Activated CD8-positive, alpha-beta T cell treated with anti-CD3 and anti-CD28 coated beads, Interleukin-2, amount 10 ng/mL, durations not matched to agents 7 days and 5 days (primary cell): ENCODE measurements at regions of chr6 and their contacts with region 1.

Region 1: GRCh38 chr6:138987640-138988468 is at the start of gene REPS1:
- DNase-seq: peak; percentile 93
- ATAC-seq: peak; percentile 97
- H3K4me3 Mint-ChIP-seq: peak within 1 kb of the TSS; percentile 87
- H3K27ac Mint-ChIP-seq: peak within 1 kb of the TSS; percentile 94
- H3K4me1 Mint-ChIP-seq: peaks cover 11% of the 10 kb centered on the region
- H3K27me3 Mint-ChIP-seq: peaks cover under 1% of the 10 kb centered on the region
- total RNA-seq, gene REPS1: 39.2 to 45.2 TPM

Region 2: DNA sequence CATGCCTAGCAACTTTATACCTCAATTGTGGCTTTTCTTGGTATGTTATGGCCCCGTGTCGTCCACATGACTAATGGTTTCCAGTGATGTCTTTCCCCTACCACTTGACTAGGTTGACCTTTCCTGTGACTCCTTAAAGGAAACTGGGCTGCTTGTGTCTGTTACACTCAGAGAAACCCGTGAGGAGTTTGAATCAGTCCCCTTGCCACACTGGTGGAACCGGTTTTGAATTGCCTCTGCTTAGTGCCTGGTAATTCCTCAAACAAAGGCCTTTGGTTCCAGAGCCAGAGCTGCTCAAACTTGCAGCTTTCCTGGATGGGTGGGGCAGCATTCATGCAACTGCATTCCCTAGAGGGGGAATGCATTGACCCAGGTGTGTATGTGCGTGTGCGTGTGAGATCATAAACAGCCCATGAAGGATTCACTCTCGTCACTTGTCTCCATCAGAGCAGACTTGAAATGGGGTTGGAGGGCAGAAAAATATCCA is 170.0 kb before region 1 on chr6:
- CTCF ChIA-PET with region 1: interaction called, 19 read pairs
- POLR2A ChIA-PET with region 1: no interaction called
- DNase-seq: peak; percentile 21
- ATAC-seq: no peak
- H3K4me3 Mint-ChIP-seq: no peak overlapping the region
- H3K27ac Mint-ChIP-seq: no peak overlapping the region
- H3K4me1 Mint-ChIP-seq: peaks cover 24% of the 10 kb centered on the region
- H3K27me3 Mint-ChIP-seq: no peaks in the 10 kb centered on the region

Region 3: GRCh38 chr6:139028658-139029469 is 41.0 kb after region 1 on chr6 and contains the start of gene ABRACL:
- CTCF ChIA-PET with region 1: interaction called, 8 read pairs
- POLR2A ChIA-PET with region 1: interaction called, 20 read pairs
- DNase-seq: peak; percentile 89
- ATAC-seq: peak; percentile 84
- H3K4me3 Mint-ChIP-seq: no peak within 1 kb of the TSS
- H3K27ac Mint-ChIP-seq: peak within 1 kb of the TSS; percentile 89
- H3K4me1 Mint-ChIP-seq: peaks cover 27% of the 10 kb centered on the region
- H3K27me3 Mint-ChIP-seq: no peaks in the 10 kb centered on the region
- total RNA-seq, gene ABRACL: 124 to 134 TPM